Activated CD8-positive, alpha-beta T cell treated with anti-CD3 and anti-CD28 coated beads for 36 hours (primary cell): ENCODE measurements at regions of chr5 and their contacts with region 1.

Region 1: GRCh38 chr5:76771705-76772405 is 47.0 kb upstream of the F2RL1 start:
- DNase-seq: no peak
- ATAC-seq: no peak
- H3K4me3 Mint-ChIP-seq: no peak overlapping the region
- H3K27ac Mint-ChIP-seq: no peak overlapping the region
- H3K4me1 Mint-ChIP-seq: peaks cover 2% of the 10 kb centered on the region
- H3K27me3 Mint-ChIP-seq: no peaks in the 10 kb centered on the region
- CTCF ChIP-seq: no peak

Region 2: GRCh38 chr5:76601470-76601869 is 170.4 kb before region 1 on chr5:
- CTCF ChIA-PET with region 1: interaction called, 122 read pairs
- POLR2A ChIA-PET with region 1: no interaction called
- intact Hi-C with region 1: loop called (anchors 2 kb)
- DNase-seq: peak; percentile 30
- ATAC-seq: peak; percentile 45
- H3K4me3 Mint-ChIP-seq: no peak overlapping the region
- H3K27ac Mint-ChIP-seq: no peak overlapping the region
- H3K4me1 Mint-ChIP-seq: peaks cover 2% of the 10 kb centered on the region
- H3K27me3 Mint-ChIP-seq: no peaks in the 10 kb centered on the region
- CTCF ChIP-seq: peak; percentile 72

Region 3: GRCh38 chr5:76652809-76653414 is 118.9 kb before region 1 on chr5:
- CTCF ChIA-PET with region 1: interaction called, 15 read pairs
- POLR2A ChIA-PET with region 1: no interaction called
- intact Hi-C with region 1: no loop called
- DNase-seq: no peak
- ATAC-seq: peak; percentile 20
- H3K4me3 Mint-ChIP-seq: no peak overlapping the region
- H3K27ac Mint-ChIP-seq: no peak overlapping the region
- H3K4me1 Mint-ChIP-seq: peaks cover 10% of the 10 kb centered on the region
- H3K27me3 Mint-ChIP-seq: no peaks in the 10 kb centered on the region
- CTCF ChIP-seq: no peak

Region 4: GRCh38 chr5:76691467-76692138 is 80.3 kb before region 1 on chr5:
- CTCF ChIA-PET with region 1: interaction called, 36 read pairs
- POLR2A ChIA-PET with region 1: no interaction called
- intact Hi-C with region 1: no loop called
- DNase-seq: no peak
- ATAC-seq: peak; percentile 74
- H3K4me3 Mint-ChIP-seq: no peak overlapping the region
- H3K27ac Mint-ChIP-seq: peak overlapping the region; percentile 76
- H3K4me1 Mint-ChIP-seq: peaks cover 16% of the 10 kb centered on the region
- H3K27me3 Mint-ChIP-seq: no peaks in the 10 kb centered on the region
- CTCF ChIP-seq: no peak

Region 5: GRCh38 chr5:76720988-76721569 is 50.8 kb before region 1 on chr5:
- CTCF ChIA-PET with region 1: interaction called, 23 read pairs
- POLR2A ChIA-PET with region 1: no interaction called
- intact Hi-C with region 1: no loop called
- DNase-seq: no peak
- ATAC-seq: no peak
- H3K4me3 Mint-ChIP-seq: no peak overlapping the region
- H3K27ac Mint-ChIP-seq: no peak overlapping the region
- H3K4me1 Mint-ChIP-seq: peaks cover 13% of the 10 kb centered on the region
- H3K27me3 Mint-ChIP-seq: peaks cover 23% of the 10 kb centered on the region
- CTCF ChIP-seq: no peak

Region 6: DNA sequence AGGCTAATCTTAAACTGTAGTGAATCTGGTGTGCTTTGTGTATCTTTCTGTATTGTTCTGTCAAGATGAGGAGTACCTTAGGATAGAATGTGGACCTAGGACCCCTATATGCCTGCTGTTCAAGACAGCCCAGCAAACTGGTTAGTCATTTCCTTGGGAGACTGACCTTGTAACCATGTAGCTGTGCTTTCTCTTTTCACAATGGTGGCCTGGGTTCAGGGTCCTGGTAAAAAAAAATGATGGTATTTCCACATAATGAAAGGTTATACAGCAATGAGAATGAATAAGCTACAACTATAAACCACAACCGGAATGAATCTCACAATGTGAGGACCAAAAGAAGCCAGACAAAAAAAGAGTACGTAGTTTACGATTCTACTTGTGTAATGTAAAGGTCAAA is 10.6 kb after region 1 on chr5:
- CTCF ChIA-PET with region 1: interaction called, 11 read pairs
- POLR2A ChIA-PET with region 1: no interaction called
- intact Hi-C with region 1: no loop called
- DNase-seq: no peak
- ATAC-seq: no peak
- H3K4me3 Mint-ChIP-seq: no peak overlapping the region
- H3K27ac Mint-ChIP-seq: no peak overlapping the region
- H3K4me1 Mint-ChIP-seq: no peaks in the 10 kb centered on the region
- H3K27me3 Mint-ChIP-seq: peaks cover 3% of the 10 kb centered on the region
- CTCF ChIP-seq: no peak

Region 7: DNA sequence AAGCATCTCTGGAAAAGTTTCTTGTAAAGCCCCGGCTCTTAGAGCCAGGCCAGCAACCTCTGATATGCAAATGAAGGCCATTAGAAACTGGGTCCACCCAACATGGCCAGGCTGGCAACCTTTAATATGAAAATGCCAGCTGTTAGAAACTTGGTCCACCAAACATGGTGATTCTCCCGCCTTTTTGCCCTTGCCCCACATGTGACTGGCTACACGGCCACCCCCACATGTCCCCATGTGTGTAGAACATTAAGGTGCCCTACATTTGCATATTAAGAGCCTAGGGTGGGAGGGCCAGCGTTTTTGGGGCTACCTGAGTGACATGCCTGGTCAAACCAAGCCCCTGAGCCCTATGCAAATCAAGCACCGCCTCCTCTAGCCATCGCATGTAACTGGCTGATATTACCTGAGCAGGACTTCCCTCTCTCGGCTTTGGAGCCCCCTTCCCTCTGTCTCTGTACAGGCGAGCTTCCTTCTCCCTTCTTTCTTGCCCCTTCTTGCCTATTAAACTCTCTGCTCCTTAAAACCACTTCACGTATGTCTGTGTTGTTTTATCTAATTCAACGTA is 117.0 kb after region 1 on chr5:
- CTCF ChIA-PET with region 1: no interaction called
- POLR2A ChIA-PET with region 1: no interaction called
- intact Hi-C with region 1: no loop called
- DNase-seq: no peak
- ATAC-seq: no peak
- H3K4me3 Mint-ChIP-seq: no peak overlapping the region
- H3K27ac Mint-ChIP-seq: no peak overlapping the region
- H3K4me1 Mint-ChIP-seq: no peaks in the 10 kb centered on the region
- H3K27me3 Mint-ChIP-seq: peaks cover 5% of the 10 kb centered on the region
- CTCF ChIP-seq: no peak